ENCODE measurements at regions of chr11 and their contacts with region 1.

Region 1: DNA sequence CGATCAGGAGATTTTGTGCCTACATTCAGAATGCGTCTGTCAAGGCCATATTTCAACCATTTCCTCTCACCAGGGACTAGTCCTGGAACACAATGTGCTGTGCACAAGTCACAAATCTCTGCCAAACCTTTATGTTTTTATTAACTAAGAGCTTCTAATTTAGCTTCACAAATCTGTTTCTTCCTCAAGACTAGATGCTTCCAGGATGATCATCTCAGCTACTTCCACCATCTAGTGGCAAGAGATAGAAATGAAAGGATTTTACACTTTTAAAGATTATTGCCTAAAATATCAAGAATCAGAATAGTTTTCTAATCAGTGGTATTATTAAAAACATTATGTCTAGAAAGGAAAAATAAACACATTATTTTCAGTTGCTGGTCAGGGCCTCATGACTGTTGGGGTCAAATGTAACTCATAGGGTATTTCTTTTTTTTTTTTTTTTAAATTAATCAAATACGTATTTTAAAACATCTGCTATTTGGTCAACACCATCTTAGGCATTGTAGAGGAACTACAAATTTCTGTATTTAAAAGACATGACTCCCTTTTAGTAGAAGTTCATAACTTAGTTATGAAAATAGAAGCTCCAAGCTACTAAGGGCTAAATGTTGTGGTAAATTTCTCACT is 1102.6 kb downstream of the DLG2 start:
- DNase-seq: peak; percentile 8

Region 2: GRCh38 chr11:83736689-83737088 is 787.8 kb before region 1 on chr11:
- in situ Hi-C with region 1: no loop called
- DNase-seq: no peak

Region 3: GRCh38 chr11:83836883-83837654 is 687.5 kb before region 1 on chr11:
- in situ Hi-C with region 1: loop called (anchors 25 kb)
- DNase-seq: peak; percentile 40

Region 4: GRCh38 chr11:84355911-84356310 is 168.6 kb before region 1 on chr11:
- in situ Hi-C with region 1: no loop called
- DNase-seq: no peak